SK-N-SH (cell line): ENCODE measurements at regions of chr6 and their contacts with region 1.

Region 1: GRCh38 chr6:136037876-136038460 is 186.5 kb downstream of the PDE7B start:
- DNase-seq: peak; percentile 65
- H3K4me3 ChIP-seq: peak overlapping the region; percentile 48 to 58
- H3K27ac ChIP-seq: peak overlapping the region; percentile 94 to 96
- H3K4me1 ChIP-seq: peaks cover 18 to 37% of the 10 kb centered on the region in 2 experiments
- H3K27me3 ChIP-seq: no peaks in the 10 kb centered on the region
- CTCF ChIP-seq: peak; percentile 59
- EP300 ChIP-seq: peak; percentile 3 to 14; a peak in 1 of 4 replicates
- RAD21 ChIP-seq: peak; percentile 42

Region 2: GRCh38 chr6:136103763-136104311 is 65.9 kb after region 1 on chr6:
- CTCF ChIA-PET with region 1: interaction called, 13 read pairs
- POLR2A ChIA-PET with region 1: interaction called, 4 read pairs
- DNase-seq: peak; percentile 48
- H3K4me3 ChIP-seq: peak overlapping the region in 1 of 2 experiments; percentile 9; a peak in 1 of 4 replicates
- H3K27ac ChIP-seq: peak overlapping the region; percentile 38 to 86; a peak in 3 of 4 replicates
- H3K4me1 ChIP-seq: peaks cover 0 to 29% of the 10 kb centered on the region in 2 experiments; a peak in 2 of 4 replicates
- H3K27me3 ChIP-seq: no peaks in the 10 kb centered on the region
- CTCF ChIP-seq: no peak
- EP300 ChIP-seq: peak in 1 of 2 experiments; percentile 81; a peak in 1 of 4 replicates
- RAD21 ChIP-seq: peak; percentile 41; the same call in 1 of the 2 replicates

Region 3: GRCh38 chr6:136201732-136202131 is 163.8 kb after region 1 on chr6:
- CTCF ChIA-PET with region 1: no interaction called
- POLR2A ChIA-PET with region 1: no interaction called
- DNase-seq: no peak
- H3K4me3 ChIP-seq: no peak overlapping the region
- H3K27ac ChIP-seq: no peak overlapping the region
- H3K4me1 ChIP-seq: no peaks in the 10 kb centered on the region
- H3K27me3 ChIP-seq: no peaks in the 10 kb centered on the region
- CTCF ChIP-seq: no peak
- EP300 ChIP-seq: no peak
- RAD21 ChIP-seq: peak; percentile 67